B cell (primary cell): ENCODE measurements at regions of chr1 and their contacts with region 1.

Region 1: GRCh38 chr1:89762779-89763648 is 57.8 kb upstream of the LRRC8D start:
- DNase-seq: peak; percentile 90
- ATAC-seq: peak; percentile 99
- H3K4me3 ChIP-seq: peak overlapping the region; percentile 40 to 62 (median 59)
- H3K4me3 Mint-ChIP-seq: peak overlapping the region; percentile 87
- H3K27ac ChIP-seq: no peak overlapping the region
- H3K27ac Mint-ChIP-seq: peak overlapping the region; percentile 34
- H3K4me1 ChIP-seq: peaks cover 9 to 20% of the 10 kb centered on the region in 2 donors
- H3K4me1 Mint-ChIP-seq: peaks cover 25% of the 10 kb centered on the region
- H3K27me3 ChIP-seq: peaks cover 0 to 9% (median 0%) of the 10 kb centered on the region in 4 experiments
- H3K27me3 Mint-ChIP-seq: peaks cover 8% of the 10 kb centered on the region
- CTCF ChIP-seq: peak; percentile 98

Region 2: GRCh38 chr1:89483010-89483756 is 279.8 kb before region 1 on chr1:
- CTCF ChIA-PET with region 1: interaction called, 144 read pairs
- POLR2A ChIA-PET with region 1: no interaction called
- intact Hi-C with region 1: loop called (anchors 1 kb)
- DNase-seq: peak; percentile 75
- ATAC-seq: peak; percentile 62
- H3K4me3 ChIP-seq: no peak overlapping the region
- H3K4me3 Mint-ChIP-seq: no peak overlapping the region
- H3K27ac ChIP-seq: no peak overlapping the region
- H3K27ac Mint-ChIP-seq: no peak overlapping the region
- H3K4me1 ChIP-seq: no peaks in the 10 kb centered on the region
- H3K4me1 Mint-ChIP-seq: no peaks in the 10 kb centered on the region
- H3K27me3 ChIP-seq: no peaks in the 10 kb centered on the region
- H3K27me3 Mint-ChIP-seq: no peaks in the 10 kb centered on the region
- CTCF ChIP-seq: peak; percentile 79

Region 3: GRCh38 chr1:89598450-89599331 is 164.3 kb before region 1 on chr1:
- CTCF ChIA-PET with region 1: interaction called, 83 read pairs
- POLR2A ChIA-PET with region 1: no interaction called
- intact Hi-C with region 1: loop called (anchors 1 kb)
- DNase-seq: peak; percentile 62
- ATAC-seq: peak; percentile 70
- H3K4me3 ChIP-seq: no peak overlapping the region
- H3K4me3 Mint-ChIP-seq: no peak overlapping the region
- H3K27ac ChIP-seq: no peak overlapping the region
- H3K27ac Mint-ChIP-seq: peak overlapping the region; percentile 16
- H3K4me1 ChIP-seq: no peaks in the 10 kb centered on the region
- H3K4me1 Mint-ChIP-seq: peaks cover 4% of the 10 kb centered on the region
- H3K27me3 ChIP-seq: no peaks in the 10 kb centered on the region
- H3K27me3 Mint-ChIP-seq: no peaks in the 10 kb centered on the region
- CTCF ChIP-seq: peak; percentile 86

Region 4: GRCh38 chr1:89632657-89633247 is 130.3 kb before region 1 on chr1 and contains the start of gene LRRC8C:
- CTCF ChIA-PET with region 1: interaction called, 334 read pairs
- POLR2A ChIA-PET with region 1: interaction called, 9 read pairs
- intact Hi-C with region 1: loop called (anchors 1 kb)
- DNase-seq: peak; percentile 93
- ATAC-seq: peak; percentile 88
- H3K4me3 ChIP-seq: peak within 1 kb of the TSS; percentile 70 to 95 (median 88)
- H3K4me3 Mint-ChIP-seq: peak within 1 kb of the TSS; percentile 97
- H3K27ac ChIP-seq: peak within 1 kb of the TSS; percentile 83 to 88
- H3K27ac Mint-ChIP-seq: peak within 1 kb of the TSS; percentile 97
- H3K4me1 ChIP-seq: peaks cover 15 to 23% of the 10 kb centered on the region in 2 donors
- H3K4me1 Mint-ChIP-seq: peaks cover 45% of the 10 kb centered on the region
- H3K27me3 ChIP-seq: no peaks in the 10 kb centered on the region
- H3K27me3 Mint-ChIP-seq: no peaks in the 10 kb centered on the region
- CTCF ChIP-seq: peak; percentile 64
- total RNA-seq, gene LRRC8C: 6.7 and 6.8 TPM in 2 replicates

Region 5: DNA sequence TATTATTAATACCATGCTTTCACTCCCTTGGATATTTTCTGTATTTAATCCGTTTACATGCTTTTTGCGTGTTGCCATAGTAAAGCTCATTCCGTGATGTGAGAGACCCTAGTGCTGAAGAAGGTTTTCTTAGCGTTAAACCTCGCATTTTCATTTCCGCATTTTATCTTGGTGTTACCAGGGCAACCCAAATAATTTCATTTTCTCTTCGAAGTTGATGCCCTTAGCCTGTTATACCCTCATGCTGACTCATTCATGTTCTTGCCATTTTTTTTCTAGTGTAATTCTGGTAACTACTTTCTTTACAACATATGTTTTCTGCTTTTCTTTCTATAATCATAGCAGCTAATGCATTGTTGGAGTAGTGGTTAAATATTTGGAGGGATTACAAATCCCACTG is 92.9 kb before region 1 on chr1:
- CTCF ChIA-PET with region 1: interaction called, 23 read pairs
- POLR2A ChIA-PET with region 1: no interaction called
- intact Hi-C with region 1: no loop called
- DNase-seq: peak; percentile 90
- ATAC-seq: peak; percentile 98
- H3K4me3 ChIP-seq: no peak overlapping the region
- H3K4me3 Mint-ChIP-seq: peak overlapping the region; percentile 61
- H3K27ac ChIP-seq: peak overlapping the region; percentile 19 to 57
- H3K27ac Mint-ChIP-seq: peak overlapping the region; percentile 59
- H3K4me1 ChIP-seq: peaks cover 21 to 22% of the 10 kb centered on the region in 2 donors
- H3K4me1 Mint-ChIP-seq: peaks cover 44% of the 10 kb centered on the region
- H3K27me3 ChIP-seq: no peaks in the 10 kb centered on the region
- H3K27me3 Mint-ChIP-seq: no peaks in the 10 kb centered on the region
- CTCF ChIP-seq: no peak

Region 6: DNA sequence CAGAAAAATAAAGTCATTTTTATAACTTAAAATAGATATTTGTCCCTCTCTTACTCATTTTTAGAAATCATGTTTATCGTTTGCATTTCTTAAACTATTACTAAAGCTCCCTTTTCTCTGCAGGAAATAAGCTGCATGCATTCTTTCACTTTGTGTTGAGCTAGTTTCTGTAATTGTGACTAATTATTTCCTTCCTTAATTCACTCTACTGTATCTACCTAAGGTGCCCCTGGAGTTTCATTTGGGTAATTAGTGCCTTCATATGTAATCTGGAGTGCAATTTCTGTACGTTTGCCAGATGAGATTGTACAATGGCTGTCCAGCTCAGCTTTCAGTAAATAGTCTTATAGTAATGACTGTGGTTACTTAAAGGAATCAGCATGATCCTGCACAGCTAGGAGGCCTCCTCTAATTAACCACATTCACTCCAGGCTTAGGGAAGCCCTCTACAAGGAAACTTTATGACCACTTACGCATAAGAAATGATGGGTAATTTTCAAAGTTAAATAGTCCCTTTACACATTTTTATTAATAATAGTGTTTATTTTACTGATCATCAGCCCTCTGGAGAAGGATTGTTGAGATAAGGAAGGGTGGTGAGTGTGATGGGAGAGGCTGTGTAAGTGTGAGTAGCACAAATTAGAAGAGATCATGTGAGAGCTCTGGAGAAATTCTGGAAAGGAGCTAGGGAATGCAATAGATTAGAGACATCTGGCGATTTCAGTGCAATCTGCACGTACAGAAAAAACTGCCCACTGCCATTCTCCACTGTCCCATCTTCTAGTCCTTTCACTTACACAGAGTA is 43.3 kb before region 1 on chr1:
- CTCF ChIA-PET with region 1: interaction called, 20 read pairs
- POLR2A ChIA-PET with region 1: no interaction called
- intact Hi-C with region 1: loop called (anchors 2 kb)
- DNase-seq: peak; percentile 62
- ATAC-seq: peak; percentile 88
- H3K4me3 ChIP-seq: peak overlapping the region in 2 of 5 experiments; percentile 19 to 30
- H3K4me3 Mint-ChIP-seq: peak overlapping the region; percentile 64
- H3K27ac ChIP-seq: peak overlapping the region; percentile 11 to 45
- H3K27ac Mint-ChIP-seq: peak overlapping the region; percentile 42
- H3K4me1 ChIP-seq: peaks cover 38 to 46% of the 10 kb centered on the region in 2 donors
- H3K4me1 Mint-ChIP-seq: peaks cover 53% of the 10 kb centered on the region
- H3K27me3 ChIP-seq: no peaks in the 10 kb centered on the region
- H3K27me3 Mint-ChIP-seq: no peaks in the 10 kb centered on the region
- CTCF ChIP-seq: peak; percentile 18